ENCODE measurements at regions of chr10 and their contacts with region 1.

Region 1: GRCh38 chr10:5094265-5095205 is at the start of gene AKR1C3:
- DNase-seq: peak in 5 of 14 experiments; percentile 2 to 69 (median 56)
- ATAC-seq: peak; percentile 83
- H3K4me3 ChIP-seq: peak within 1 kb of the TSS; percentile 66
- H3K4me3 Mint-ChIP-seq: peak within 1 kb of the TSS; percentile 86
- H3K27ac ChIP-seq: no peak within 1 kb of the TSS
- H3K27ac Mint-ChIP-seq: peak within 1 kb of the TSS; percentile 57
- H3K4me1 ChIP-seq: no peaks in the 10 kb centered on the region
- H3K4me1 Mint-ChIP-seq: peaks cover 8% of the 10 kb centered on the region
- H3K27me3 ChIP-seq: peaks cover 0 to 4% of the 10 kb centered on the region in 2 experiments
- H3K27me3 Mint-ChIP-seq: peaks cover 8% of the 10 kb centered on the region
- CTCF ChIP-seq: peak; percentile 65
- total RNA-seq, gene AKR1C3: 1.9 to 2.0 TPM

Region 2: GRCh38 chr10:5274795-5275194 is 180.3 kb after region 1 on chr10:
- CTCF ChIA-PET with region 1: no interaction called
- POLR2A ChIA-PET with region 1: no interaction called
- intact Hi-C with region 1: loop called in 1 of 2 experiments (anchors 5 kb)
- DNase-seq: peak in 2 of 14 experiments; percentile 29 to 33
- ATAC-seq: no peak
- H3K4me3 ChIP-seq: no peak overlapping the region
- H3K4me3 Mint-ChIP-seq: no peak overlapping the region
- H3K27ac ChIP-seq: no peak overlapping the region
- H3K27ac Mint-ChIP-seq: no peak overlapping the region
- H3K4me1 ChIP-seq: peaks cover 4% of the 10 kb centered on the region
- H3K4me1 Mint-ChIP-seq: no peaks in the 10 kb centered on the region
- H3K27me3 ChIP-seq: no peaks in the 10 kb centered on the region
- H3K27me3 Mint-ChIP-seq: no peaks in the 10 kb centered on the region
- CTCF ChIP-seq: no peak

Region 3: GRCh38 chr10:5293691-5294550 is 199.4 kb after region 1 on chr10:
- CTCF ChIA-PET with region 1: interaction called, 4 read pairs
- POLR2A ChIA-PET with region 1: no interaction called
- intact Hi-C with region 1: loop called in 1 of 2 experiments (anchors 5 kb)
- DNase-seq: peak in 10 of 14 experiments; percentile 43 to 86 (median 70)
- ATAC-seq: peak; percentile 59
- H3K4me3 ChIP-seq: peak overlapping the region; percentile 60
- H3K4me3 Mint-ChIP-seq: peak overlapping the region; percentile 90
- H3K27ac ChIP-seq: peak overlapping the region; percentile 77 to 95
- H3K27ac Mint-ChIP-seq: peak overlapping the region; percentile 99
- H3K4me1 ChIP-seq: peaks cover 83% of the 10 kb centered on the region
- H3K4me1 Mint-ChIP-seq: peaks cover 81% of the 10 kb centered on the region
- H3K27me3 ChIP-seq: no peaks in the 10 kb centered on the region
- H3K27me3 Mint-ChIP-seq: no peaks in the 10 kb centered on the region
- CTCF ChIP-seq: no peak

Measured in CD4-positive, alpha-beta T cell (primary cell).